ENCODE measurements at regions of chr5 and their contacts with region 1.

Region 1: DNA sequence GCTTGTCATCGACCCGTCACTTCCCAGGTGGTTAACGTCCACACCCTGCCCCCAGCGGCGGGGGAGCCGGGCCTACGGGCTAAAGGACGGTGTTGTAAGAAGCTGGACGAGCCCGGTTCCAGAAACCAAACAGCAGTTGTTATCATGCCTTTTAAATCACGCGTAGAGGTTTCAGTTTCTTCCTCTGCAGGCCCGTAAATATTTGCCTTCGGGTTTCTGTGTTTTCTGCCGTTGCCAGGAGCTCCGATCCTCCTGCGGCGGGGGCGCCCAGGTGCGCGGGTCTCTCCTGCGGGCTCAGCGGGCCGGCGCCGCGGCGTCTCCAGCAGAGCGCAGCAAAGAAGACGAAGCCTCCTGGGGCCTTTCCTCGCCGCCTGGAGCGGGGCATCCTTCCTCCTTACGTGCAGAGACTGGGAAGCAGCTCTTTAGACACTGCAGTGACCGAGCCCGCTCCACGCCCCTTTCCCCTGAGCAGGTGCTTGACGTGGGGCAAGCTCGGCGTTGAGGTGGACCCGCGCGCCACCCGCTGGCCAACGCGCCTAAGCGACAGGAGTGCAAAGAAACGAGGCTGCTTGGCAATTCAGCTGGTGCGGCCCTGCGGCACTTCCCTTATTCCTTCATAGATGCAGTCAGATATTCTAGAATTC is 21.8 kb upstream of the TTC1 start:
- DNase-seq: peak; percentile 76
- H3K4me3 ChIP-seq: peak overlapping the region; percentile 11 to 21 (median 18)
- H3K27ac ChIP-seq: no peak overlapping the region
- H3K4me1 ChIP-seq: peaks cover 29% of the 10 kb centered on the region
- H3K27me3 ChIP-seq: no peaks in the 10 kb centered on the region
- CTCF ChIP-seq: peak; percentile 81 to 89

Region 2: GRCh38 chr5:159156426-159157238 is 830.5 kb before region 1 on chr5:
- CTCF ChIA-PET with region 1: interaction called, 3 read pairs
- dilution Hi-C with region 1: no loop called
- in situ Hi-C with region 1: loop called in 1 of 2 experiments (anchors 25 kb)
- intact Hi-C with region 1: loop called (anchors 2 kb)
- DNase-seq: peak; percentile 65
- H3K4me3 ChIP-seq: no peak overlapping the region
- H3K27ac ChIP-seq: no peak overlapping the region
- H3K4me1 ChIP-seq: peaks cover under 1% of the 10 kb centered on the region
- H3K27me3 ChIP-seq: no peaks in the 10 kb centered on the region
- CTCF ChIP-seq: peak; percentile 84 to 87

Region 3: GRCh38 chr5:159331093-159331973 is 655.8 kb before region 1 on chr5:
- CTCF ChIA-PET with region 1: no interaction called
- dilution Hi-C with region 1: no loop called
- in situ Hi-C with region 1: loop called in 1 of 2 experiments (anchors 25 kb)
- intact Hi-C with region 1: loop called (anchors 5 kb)
- DNase-seq: no peak
- H3K4me3 ChIP-seq: peak overlapping the region; percentile 37 to 56 (median 45)
- H3K27ac ChIP-seq: no peak overlapping the region
- H3K4me1 ChIP-seq: peaks cover 9% of the 10 kb centered on the region
- H3K27me3 ChIP-seq: no peaks in the 10 kb centered on the region
- CTCF ChIP-seq: peak; percentile 56 to 83

Region 4: GRCh38 chr5:159438092-159438491 is 549.1 kb before region 1 on chr5:
- CTCF ChIA-PET with region 1: no interaction called
- dilution Hi-C with region 1: no loop called
- in situ Hi-C with region 1: no loop called
- intact Hi-C with region 1: no loop called
- DNase-seq: no peak
- H3K4me3 ChIP-seq: no peak overlapping the region
- H3K27ac ChIP-seq: no peak overlapping the region
- H3K4me1 ChIP-seq: no peaks in the 10 kb centered on the region
- H3K27me3 ChIP-seq: no peaks in the 10 kb centered on the region
- CTCF ChIP-seq: no peak

Region 5: GRCh38 chr5:159531554-159532105 is 455.5 kb before region 1 on chr5:
- CTCF ChIA-PET with region 1: no interaction called
- dilution Hi-C with region 1: no loop called
- in situ Hi-C with region 1: no loop called
- intact Hi-C with region 1: loop called (anchors 5 kb)
- DNase-seq: no peak
- H3K4me3 ChIP-seq: no peak overlapping the region
- H3K27ac ChIP-seq: no peak overlapping the region
- H3K4me1 ChIP-seq: no peaks in the 10 kb centered on the region
- H3K27me3 ChIP-seq: no peaks in the 10 kb centered on the region
- CTCF ChIP-seq: peak; percentile 10 to 30

Region 6: GRCh38 chr5:159773062-159773924 is 213.9 kb before region 1 on chr5:
- CTCF ChIA-PET with region 1: no interaction called
- dilution Hi-C with region 1: no loop called
- in situ Hi-C with region 1: no loop called
- intact Hi-C with region 1: loop called (anchors 5 kb)
- DNase-seq: peak; percentile 90
- H3K4me3 ChIP-seq: peak overlapping the region; percentile 16 to 45 (median 35)
- H3K27ac ChIP-seq: peak overlapping the region; percentile 41
- H3K4me1 ChIP-seq: peaks cover 10% of the 10 kb centered on the region
- H3K27me3 ChIP-seq: no peaks in the 10 kb centered on the region
- CTCF ChIP-seq: peak in 1 of 2 donors; percentile 11

Region 7: GRCh38 chr5:159915904-159916840 is 71.0 kb before region 1 on chr5 and contains the start of gene ADRA1B:
- CTCF ChIA-PET with region 1: interaction called, 22 read pairs
- dilution Hi-C with region 1: no loop called
- in situ Hi-C with region 1: no loop called
- intact Hi-C with region 1: loop called (anchors 1 kb)
- DNase-seq: peak; percentile 41
- H3K4me3 ChIP-seq: peak within 1 kb of the TSS; percentile 12 to 41 (median 33)
- H3K27ac ChIP-seq: no peak within 1 kb of the TSS
- H3K4me1 ChIP-seq: peaks cover 49% of the 10 kb centered on the region
- H3K27me3 ChIP-seq: no peaks in the 10 kb centered on the region
- CTCF ChIP-seq: peak; percentile 36 to 65
- total RNA-seq, gene ADRA1B: 0.67 to 0.80 TPM